ENCODE measurements at regions of chr1 and their contacts with region 1.

Region 1: DNA sequence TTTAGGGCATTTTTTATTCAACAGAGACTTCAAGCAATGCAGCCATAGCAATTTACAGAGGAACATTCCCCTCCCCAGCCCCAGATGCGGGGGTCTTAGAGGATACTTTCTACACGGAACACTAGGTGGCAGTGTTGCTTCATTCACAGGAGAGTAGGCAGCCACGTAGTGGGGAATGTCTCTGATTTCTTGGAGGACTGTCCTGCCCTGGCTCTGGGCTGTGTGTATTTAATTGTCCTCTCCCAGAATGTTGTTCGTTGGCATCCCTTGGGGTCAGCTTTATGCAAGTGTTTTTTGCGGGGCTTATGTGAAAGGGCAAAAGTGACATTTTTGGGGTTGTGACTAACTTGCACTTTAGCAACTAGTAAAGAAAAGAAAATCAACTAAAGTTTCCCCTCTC is 96.9 kb downstream of the PAPPA2 start:
- DNase-seq: peak; percentile 82 to 84 (median 84)
- ATAC-seq: peak; percentile 98
- H3K4me3 ChIP-seq: no peak overlapping the region
- H3K27ac ChIP-seq: no peak overlapping the region
- H3K4me1 ChIP-seq: no peaks in the 10 kb centered on the region
- H3K27me3 ChIP-seq: peaks cover 5 to 18% of the 10 kb centered on the region in 2 experiments; a peak in 4 of 5 replicates
- CTCF ChIP-seq: peak; percentile 83 to 92 (median 86)
- EP300 ChIP-seq: no peak
- POLR2A ChIP-seq: no peak
- RAD21 ChIP-seq: peak; percentile 95 to 96

Region 2: GRCh38 chr1:176691251-176692228 is 131.7 kb after region 1 on chr1:
- CTCF ChIA-PET with region 1: interaction called, 3 read pairs
- POLR2A ChIA-PET with region 1: no interaction called
- in situ Hi-C with region 1: no loop called
- intact Hi-C with region 1: loop called (anchors 1 kb)
- DNase-seq: peak; percentile 35 to 76 (median 49)
- ATAC-seq: peak; percentile 91
- H3K4me3 ChIP-seq: no peak overlapping the region
- H3K27ac ChIP-seq: no peak overlapping the region
- H3K4me1 ChIP-seq: no peaks in the 10 kb centered on the region; a peak in 1 of 5 replicates
- H3K27me3 ChIP-seq: 0 out of 5 replicates have a peak, but pooled peaks cover 0 to 3% of the 10 kb centered on the region in 2 experiments
- CTCF ChIP-seq: peak; percentile 76 to 80 (median 80)
- EP300 ChIP-seq: no peak
- POLR2A ChIP-seq: no peak
- RAD21 ChIP-seq: peak; percentile 77 to 78

Region 3: GRCh38 chr1:176745945-176746344 is 186.1 kb after region 1 on chr1:
- CTCF ChIA-PET with region 1: interaction called, 4 read pairs
- POLR2A ChIA-PET with region 1: no interaction called
- in situ Hi-C with region 1: no loop called
- intact Hi-C with region 1: loop called (anchors 1 kb)
- DNase-seq: peak in 1 of 4 experiments; percentile 21
- ATAC-seq: peak; percentile 77; the same call in 2 of the 3 replicates
- H3K4me3 ChIP-seq: no peak overlapping the region
- H3K27ac ChIP-seq: no peak overlapping the region
- H3K4me1 ChIP-seq: no peaks in the 10 kb centered on the region
- H3K27me3 ChIP-seq: peaks cover 0 to 3% of the 10 kb centered on the region in 2 experiments; a peak in 2 of 5 replicates
- CTCF ChIP-seq: peak; percentile 35 to 56 (median 53); a peak in 5 of 6 replicates
- EP300 ChIP-seq: no peak
- POLR2A ChIP-seq: no peak
- RAD21 ChIP-seq: peak; percentile 8 to 71; a peak in 3 of 4 replicates

Region 4: GRCh38 chr1:176843352-176844297 is 283.7 kb after region 1 on chr1:
- CTCF ChIA-PET with region 1: interaction called, 14 read pairs
- POLR2A ChIA-PET with region 1: no interaction called
- in situ Hi-C with region 1: no loop called
- intact Hi-C with region 1: loop called (anchors 1 kb)
- DNase-seq: peak; percentile 19 to 67 (median 34)
- ATAC-seq: peak; percentile 71
- H3K4me3 ChIP-seq: no peak overlapping the region
- H3K27ac ChIP-seq: no peak overlapping the region
- H3K4me1 ChIP-seq: peaks cover 0 to 10% of the 10 kb centered on the region in 2 experiments; a peak in 3 of 5 replicates
- H3K27me3 ChIP-seq: peaks cover 4 to 6% of the 10 kb centered on the region in 2 experiments; a peak in 3 of 5 replicates
- CTCF ChIP-seq: peak; percentile 54 to 87 (median 62); a peak in 5 of 6 replicates
- EP300 ChIP-seq: no peak
- POLR2A ChIP-seq: no peak
- RAD21 ChIP-seq: peak; percentile 94 to 95

Region 5: DNA sequence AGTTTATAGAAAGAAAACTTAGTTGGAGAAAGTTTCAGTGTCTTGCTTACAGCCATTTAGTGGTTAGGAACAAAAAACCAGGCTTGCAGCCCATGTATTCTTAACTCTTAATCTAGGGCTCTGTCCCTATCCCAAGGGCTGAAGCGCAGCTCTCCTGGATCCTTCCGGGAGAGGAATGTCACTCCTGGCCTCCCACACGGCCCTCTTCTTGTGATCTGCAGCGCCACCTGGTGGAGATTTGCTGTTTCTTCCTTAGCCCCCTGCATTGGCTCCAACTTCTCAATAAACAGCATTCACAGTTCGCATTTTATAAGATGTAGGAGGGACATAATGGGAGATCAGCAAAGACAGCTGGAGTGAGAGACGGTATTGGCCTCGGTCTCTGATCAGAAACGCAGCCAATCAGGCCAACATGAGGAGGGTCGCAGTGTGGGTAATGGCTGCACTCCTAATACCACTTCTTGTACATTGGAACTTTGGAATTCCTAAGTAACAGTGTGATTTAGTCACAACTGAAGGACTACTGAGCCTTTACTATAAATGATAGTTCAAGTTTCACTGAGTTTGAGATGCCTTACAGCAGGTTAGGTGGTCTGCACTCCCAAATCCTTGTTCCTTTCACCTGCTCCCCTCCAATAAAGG is 321.2 kb after region 1 on chr1:
- CTCF ChIA-PET with region 1: interaction called, 44 read pairs
- POLR2A ChIA-PET with region 1: interaction called, 4 read pairs
- in situ Hi-C with region 1: loop called (anchors 5 kb)
- intact Hi-C with region 1: loop called (anchors 1 kb)
- DNase-seq: peak; percentile 81 to 92 (median 91)
- ATAC-seq: peak; percentile 67
- H3K4me3 ChIP-seq: no peak overlapping the region
- H3K27ac ChIP-seq: peak overlapping the region; percentile 88
- H3K4me1 ChIP-seq: peaks cover 33 to 50% of the 10 kb centered on the region in 2 experiments
- H3K27me3 ChIP-seq: no peaks in the 10 kb centered on the region
- CTCF ChIP-seq: peak; percentile 86 to 96 (median 95)
- EP300 ChIP-seq: peak; percentile 25; the same call in 1 of the 2 replicates
- POLR2A ChIP-seq: no peak
- RAD21 ChIP-seq: peak; percentile 96 to 97

Region 6: GRCh38 chr1:176949033-176949662 is 389.3 kb after region 1 on chr1:
- CTCF ChIA-PET with region 1: no interaction called
- POLR2A ChIA-PET with region 1: no interaction called
- in situ Hi-C with region 1: no loop called
- intact Hi-C with region 1: loop called (anchors 1 kb)
- DNase-seq: peak; percentile 83 to 87 (median 85)
- ATAC-seq: peak; percentile 100
- H3K4me3 ChIP-seq: no peak overlapping the region
- H3K27ac ChIP-seq: no peak overlapping the region
- H3K4me1 ChIP-seq: no peaks in the 10 kb centered on the region
- H3K27me3 ChIP-seq: peaks cover 0 to 9% of the 10 kb centered on the region in 2 experiments; a peak in 1 of 5 replicates
- CTCF ChIP-seq: peak; percentile 97 to 99 (median 97)
- EP300 ChIP-seq: no peak
- POLR2A ChIP-seq: no peak
- RAD21 ChIP-seq: peak; percentile 51 to 84

Region 7: DNA sequence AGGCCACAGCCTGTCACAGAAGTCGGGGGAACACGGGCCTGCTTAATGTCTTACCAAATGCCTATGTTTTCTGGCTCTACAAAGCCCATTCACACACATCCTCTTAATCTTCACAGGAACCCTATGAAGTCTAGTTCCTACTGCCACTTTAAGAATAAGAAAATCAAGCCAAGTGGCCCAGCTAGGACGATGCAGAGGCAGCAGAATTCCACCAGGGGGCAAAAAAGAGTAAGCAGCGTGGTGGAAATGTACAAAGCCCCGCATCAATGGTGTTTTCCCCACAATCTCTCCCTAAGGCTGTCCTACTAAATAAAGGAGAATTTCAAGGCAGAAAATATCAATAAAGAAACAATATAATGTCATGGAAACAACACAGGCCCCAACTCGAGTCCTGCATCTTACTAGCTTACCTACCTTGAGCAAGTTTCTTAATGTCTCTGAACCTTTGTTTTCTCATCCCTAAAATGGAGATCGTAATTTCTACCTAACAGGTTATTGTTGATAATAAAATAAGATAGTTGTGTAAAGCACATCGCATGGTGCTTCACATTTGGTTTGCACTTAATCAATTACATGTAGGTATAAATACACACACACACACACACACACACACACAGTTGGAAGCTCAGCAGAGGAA is 1388.6 kb after region 1 on chr1:
- CTCF ChIA-PET with region 1: no interaction called
- POLR2A ChIA-PET with region 1: no interaction called
- in situ Hi-C with region 1: loop called (anchors 25 kb)
- intact Hi-C with region 1: no loop called
- DNase-seq: peak; percentile 54 to 64 (median 62)
- ATAC-seq: peak; percentile 86
- H3K4me3 ChIP-seq: no peak overlapping the region
- H3K27ac ChIP-seq: no peak overlapping the region
- H3K4me1 ChIP-seq: no peaks in the 10 kb centered on the region
- H3K27me3 ChIP-seq: peaks cover 0 to 6% of the 10 kb centered on the region in 2 experiments; a peak in 1 of 5 replicates
- CTCF ChIP-seq: peak; percentile 78 to 84 (median 80)
- EP300 ChIP-seq: no peak
- POLR2A ChIP-seq: no peak
- RAD21 ChIP-seq: peak in 1 of 2 experiments; percentile 51; a peak in 2 of 4 replicates

Measured in K562 (cell line).